ENCODE measurements at regions of chr12 and their contacts with region 1.

Region 1: GRCh38 chr12:110937104-110937641 is 16.8 kb upstream of the MYL2 start:
- DNase-seq: peak; percentile 65 to 66
- ATAC-seq: peak; percentile 55 to 77; a peak in 5 of 6 replicates
- H3K4me3 ChIP-seq: no peak overlapping the region
- H3K27ac ChIP-seq: no peak overlapping the region; a peak in 1 of 6 replicates
- H3K4me1 ChIP-seq: peaks cover 23% of the 10 kb centered on the region
- CTCF ChIP-seq: peak; percentile 92
- EP300 ChIP-seq: no peak
- POLR2A ChIP-seq: no peak
- RAD21 ChIP-seq: peak; percentile 87 to 89

Region 2: DNA sequence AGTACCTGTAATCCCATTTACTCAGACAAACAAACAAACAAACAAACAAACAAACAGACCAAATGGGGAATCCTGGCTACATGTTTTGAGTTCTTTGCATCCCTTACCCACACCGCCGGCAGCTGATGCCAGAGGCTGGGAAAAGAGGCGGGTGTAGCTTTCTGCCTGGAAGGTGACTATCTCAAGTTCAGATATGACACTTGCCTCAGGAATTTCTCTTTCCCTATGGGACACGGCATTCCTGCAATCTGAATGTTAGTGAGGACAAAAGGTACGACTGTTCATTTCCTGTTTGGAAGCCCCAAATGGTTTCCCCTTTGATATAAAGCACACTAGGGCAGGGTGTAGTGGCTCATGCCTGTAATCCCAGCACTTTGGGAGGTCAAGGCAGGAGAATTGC is 19.7 kb before region 1 on chr12:
- CTCF ChIA-PET with region 1: interaction called, 15 read pairs
- POLR2A ChIA-PET with region 1: no interaction called
- DNase-seq: peak; percentile 70 to 82
- ATAC-seq: peak; percentile 80 to 85
- H3K4me3 ChIP-seq: no peak overlapping the region
- H3K27ac ChIP-seq: peak overlapping the region; percentile 69 to 84; a peak in 5 of 6 replicates
- H3K4me1 ChIP-seq: peaks cover 27% of the 10 kb centered on the region
- CTCF ChIP-seq: no peak
- EP300 ChIP-seq: no peak
- POLR2A ChIP-seq: no peak
- RAD21 ChIP-seq: no peak

Region 3: GRCh38 chr12:111166779-111167540 is 229.8 kb after region 1 on chr12:
- CTCF ChIA-PET with region 1: interaction called, 11 read pairs
- POLR2A ChIA-PET with region 1: no interaction called
- DNase-seq: no peak
- ATAC-seq: peak in 1 of 2 experiments; percentile 32; a peak in 2 of 6 replicates
- H3K4me3 ChIP-seq: no peak overlapping the region
- H3K27ac ChIP-seq: no peak overlapping the region
- H3K4me1 ChIP-seq: no peaks in the 10 kb centered on the region
- CTCF ChIP-seq: no peak
- EP300 ChIP-seq: no peak
- POLR2A ChIP-seq: no peak
- RAD21 ChIP-seq: no peak

Region 4: GRCh38 chr12:111298582-111299436 is 361.6 kb after region 1 on chr12:
- CTCF ChIA-PET with region 1: interaction called, 43 read pairs
- POLR2A ChIA-PET with region 1: no interaction called
- DNase-seq: peak; percentile 64 to 74
- ATAC-seq: peak; percentile 85 to 95
- H3K4me3 ChIP-seq: no peak overlapping the region
- H3K27ac ChIP-seq: no peak overlapping the region
- H3K4me1 ChIP-seq: no peaks in the 10 kb centered on the region
- CTCF ChIP-seq: peak; percentile 85
- EP300 ChIP-seq: no peak
- POLR2A ChIP-seq: no peak
- RAD21 ChIP-seq: peak; percentile 67 to 79